CD4-positive, alpha-beta memory T cell (primary cell): ENCODE measurements at regions of chr1 and their contacts with region 1.

Region 1: GRCh38 chr1:90964444-90965035 is 57.3 kb downstream of the ZNF644 start:
- DNase-seq: peak in 2 of 5 donors; percentile 14 to 15
- H3K4me3 ChIP-seq: no peak overlapping the region
- H3K4me3 Mint-ChIP-seq: no peak overlapping the region
- H3K27ac ChIP-seq: no peak overlapping the region
- H3K27ac Mint-ChIP-seq: peak overlapping the region in 1 of 7 donors; percentile 22
- H3K4me1 ChIP-seq: peaks cover 14% of the 10 kb centered on the region
- H3K4me1 Mint-ChIP-seq: peaks cover 31 to 56% (median 47%) of the 10 kb centered on the region in 4 donors
- H3K27me3 ChIP-seq: no peaks in the 10 kb centered on the region
- H3K27me3 Mint-ChIP-seq: no peaks in the 10 kb centered on the region

Region 2: DNA sequence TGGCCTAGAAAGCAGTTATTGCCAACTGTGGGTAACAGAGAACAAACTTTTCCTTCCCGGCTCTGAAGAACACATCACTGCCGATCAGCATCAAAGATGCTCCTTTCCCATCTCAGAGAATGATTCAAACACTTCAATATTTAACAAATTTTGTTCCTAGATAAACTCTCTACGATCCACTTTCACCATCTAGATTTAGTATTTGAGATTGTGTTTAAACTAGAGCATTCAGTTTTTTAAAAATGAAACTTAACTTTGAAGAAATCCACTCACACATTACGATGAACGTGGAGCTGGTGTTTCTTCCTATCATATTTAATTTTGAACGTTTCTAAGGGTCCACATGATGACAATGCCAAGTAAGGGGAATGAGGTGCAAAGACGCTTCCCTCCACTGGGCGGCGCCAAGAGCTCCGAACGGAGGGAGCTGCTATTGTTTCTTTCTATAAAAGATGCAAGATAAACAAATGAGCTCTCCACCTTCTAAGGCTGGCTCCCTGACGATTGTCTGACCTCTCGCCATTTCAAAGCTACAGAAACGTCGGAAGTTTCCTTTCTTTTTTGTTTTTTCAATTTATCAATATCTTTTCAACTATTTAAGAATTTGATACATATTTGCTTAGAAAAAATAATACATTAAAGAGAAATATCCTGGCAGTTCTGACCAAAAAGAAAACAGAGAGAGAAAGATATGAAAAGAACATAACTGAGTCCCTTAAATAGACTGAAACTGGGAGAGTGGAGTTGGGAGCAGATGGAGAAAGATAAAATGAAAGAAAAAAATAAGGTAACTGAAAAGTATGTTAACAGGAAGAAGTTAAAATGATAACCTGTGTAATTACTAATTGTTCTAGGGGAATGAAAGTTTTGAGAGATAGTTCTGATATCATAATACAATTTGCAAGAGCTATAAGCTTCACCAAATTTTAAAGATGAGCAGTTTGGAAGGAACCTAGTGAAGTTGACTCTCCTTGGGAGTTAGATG is 243.0 kb before region 1 on chr1:
- CTCF ChIA-PET with region 1: interaction called, 18 read pairs
- POLR2A ChIA-PET with region 1: no interaction called
- intact Hi-C with region 1: loop called (anchors 1 kb)
- DNase-seq: peak in 1 of 5 donors; percentile 48
- H3K4me3 ChIP-seq: no peak overlapping the region
- H3K4me3 Mint-ChIP-seq: peak overlapping the region in 5 of 8 donors; percentile 30 to 57 (median 36)
- H3K27ac ChIP-seq: no peak overlapping the region
- H3K27ac Mint-ChIP-seq: peak overlapping the region in 3 of 7 donors; percentile 65 to 66 (median 66)
- H3K4me1 ChIP-seq: peaks cover 36% of the 10 kb centered on the region
- H3K4me1 Mint-ChIP-seq: peaks cover 26 to 64% (median 42%) of the 10 kb centered on the region in 4 donors
- H3K27me3 ChIP-seq: peaks cover 77% of the 10 kb centered on the region
- H3K27me3 Mint-ChIP-seq: peaks cover 73 to 77% of the 10 kb centered on the region in 2 donors

Region 3: DNA sequence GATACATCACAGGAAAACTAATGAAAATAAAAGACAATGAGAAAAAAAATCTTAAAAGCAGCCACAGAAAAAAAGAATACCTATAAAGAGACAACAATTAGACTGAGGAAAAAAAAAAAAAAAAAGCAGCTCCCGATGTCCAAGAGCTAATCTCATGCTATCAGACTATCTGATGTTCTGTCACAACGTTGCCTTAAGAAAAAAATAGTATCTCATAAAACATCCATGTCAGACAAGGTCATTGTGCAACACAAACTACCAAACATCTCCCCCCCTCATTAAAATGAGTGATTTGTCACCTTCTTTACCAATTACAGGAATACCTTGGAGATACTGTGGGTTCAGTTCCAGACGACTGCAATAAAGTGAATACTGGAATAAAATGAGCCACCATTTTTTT is 11.6 kb before region 1 on chr1:
- CTCF ChIA-PET with region 1: no interaction called
- POLR2A ChIA-PET with region 1: no interaction called
- intact Hi-C with region 1: no loop called
- DNase-seq: no peak
- H3K4me3 ChIP-seq: no peak overlapping the region
- H3K4me3 Mint-ChIP-seq: peak overlapping the region in 1 of 8 donors; percentile 39
- H3K27ac ChIP-seq: no peak overlapping the region
- H3K27ac Mint-ChIP-seq: peak overlapping the region in 3 of 7 donors; percentile 26 to 55 (median 29)
- H3K4me1 ChIP-seq: peaks cover 36% of the 10 kb centered on the region
- H3K4me1 Mint-ChIP-seq: peaks cover 54 to 81% (median 64%) of the 10 kb centered on the region in 4 donors
- H3K27me3 ChIP-seq: no peaks in the 10 kb centered on the region
- H3K27me3 Mint-ChIP-seq: no peaks in the 10 kb centered on the region

Region 4: DNA sequence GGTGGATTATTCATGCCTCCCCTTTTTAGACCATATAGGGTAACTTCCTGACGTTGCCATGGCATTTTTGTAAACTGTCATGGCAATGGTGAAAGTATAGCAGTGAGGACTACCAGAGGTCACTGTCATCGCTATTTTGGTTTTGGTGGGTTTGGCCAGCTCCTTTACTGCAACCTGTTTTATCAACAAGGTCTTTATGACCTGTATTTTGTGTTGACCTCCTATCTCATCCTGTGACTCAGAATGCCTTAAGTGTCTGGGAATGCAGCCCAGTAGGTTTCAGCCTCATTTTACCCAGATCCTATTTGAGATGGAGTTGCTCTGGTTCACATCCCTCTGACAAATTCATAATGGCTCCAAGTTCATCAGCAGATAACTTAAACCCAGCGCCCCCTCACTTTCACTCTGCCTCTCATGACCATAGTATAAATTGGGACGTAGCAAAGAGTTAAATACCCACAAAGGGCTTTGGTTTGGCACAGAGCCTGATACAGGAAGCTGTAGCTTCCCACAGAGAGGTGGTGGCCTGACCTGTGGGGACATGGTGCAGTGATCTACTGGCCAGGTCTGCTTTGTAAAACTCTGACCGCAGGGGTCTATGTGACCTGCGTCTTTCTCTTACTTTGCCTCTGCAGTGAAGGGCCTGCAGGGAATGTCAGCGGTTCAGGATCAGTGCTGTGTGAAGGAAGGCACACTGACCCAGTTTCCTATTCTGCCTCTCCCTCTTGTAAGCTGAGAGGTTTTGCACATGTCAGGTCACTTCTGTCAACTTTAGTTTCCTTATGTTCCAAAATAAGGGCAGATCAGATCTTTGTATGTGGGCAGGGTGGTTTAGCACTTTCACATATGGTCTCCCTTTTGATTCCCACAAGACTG is 135.4 kb after region 1 on chr1:
- CTCF ChIA-PET with region 1: no interaction called
- POLR2A ChIA-PET with region 1: no interaction called
- intact Hi-C with region 1: no loop called
- DNase-seq: peak in 4 of 5 donors; percentile 17 to 20 (median 20)
- H3K4me3 ChIP-seq: no peak overlapping the region
- H3K4me3 Mint-ChIP-seq: peak overlapping the region in 7 of 8 donors; percentile 22 to 74 (median 47)
- H3K27ac ChIP-seq: no peak overlapping the region
- H3K27ac Mint-ChIP-seq: peak overlapping the region in 1 of 7 donors; percentile 4
- H3K4me1 ChIP-seq: peaks cover 14% of the 10 kb centered on the region
- H3K4me1 Mint-ChIP-seq: peaks cover 9 to 15% (median 10%) of the 10 kb centered on the region in 4 donors
- H3K27me3 ChIP-seq: no peaks in the 10 kb centered on the region
- H3K27me3 Mint-ChIP-seq: peaks cover 0 to 2% of the 10 kb centered on the region in 2 donors

Region 5: DNA sequence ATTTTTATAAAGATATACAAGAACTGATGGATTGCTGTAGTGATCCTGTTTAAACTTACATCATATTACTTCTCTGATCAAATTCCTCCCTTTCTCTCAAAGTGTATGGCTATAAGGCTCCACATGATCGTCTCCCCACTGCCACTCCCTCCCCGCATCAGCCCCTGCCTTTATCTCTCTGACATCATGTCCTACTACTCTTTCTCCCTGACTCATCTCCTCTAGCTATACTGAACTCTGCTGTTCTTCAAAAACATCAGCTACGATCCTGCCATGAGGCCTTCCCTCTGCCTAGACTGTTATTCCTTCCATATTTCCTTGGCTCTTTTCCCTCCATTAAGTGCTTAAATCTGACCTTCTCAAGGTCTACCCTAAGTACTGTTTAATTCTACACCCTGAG is 417.3 kb after region 1 on chr1:
- CTCF ChIA-PET with region 1: no interaction called
- POLR2A ChIA-PET with region 1: no interaction called
- intact Hi-C with region 1: no loop called
- DNase-seq: no peak
- H3K4me3 ChIP-seq: no peak overlapping the region
- H3K4me3 Mint-ChIP-seq: no peak overlapping the region
- H3K27ac ChIP-seq: no peak overlapping the region
- H3K27ac Mint-ChIP-seq: no peak overlapping the region
- H3K4me1 ChIP-seq: no peaks in the 10 kb centered on the region
- H3K4me1 Mint-ChIP-seq: no peaks in the 10 kb centered on the region
- H3K27me3 ChIP-seq: no peaks in the 10 kb centered on the region
- H3K27me3 Mint-ChIP-seq: peaks cover 10 to 13% of the 10 kb centered on the region in 2 donors